ENCODE measurements at regions of chr1 and their contacts with region 1.

Region 1: GRCh38 chr1:168863772-168864171 is 134.8 kb upstream of the DPT start:
- DNase-seq: no peak
- ATAC-seq: no peak
- H3K4me3 ChIP-seq: no peak overlapping the region
- H3K27ac ChIP-seq: no peak overlapping the region
- H3K4me1 ChIP-seq: peaks cover 24% of the 10 kb centered on the region
- H3K27me3 ChIP-seq: no peaks in the 10 kb centered on the region
- CTCF ChIP-seq: no peak

Region 2: DNA sequence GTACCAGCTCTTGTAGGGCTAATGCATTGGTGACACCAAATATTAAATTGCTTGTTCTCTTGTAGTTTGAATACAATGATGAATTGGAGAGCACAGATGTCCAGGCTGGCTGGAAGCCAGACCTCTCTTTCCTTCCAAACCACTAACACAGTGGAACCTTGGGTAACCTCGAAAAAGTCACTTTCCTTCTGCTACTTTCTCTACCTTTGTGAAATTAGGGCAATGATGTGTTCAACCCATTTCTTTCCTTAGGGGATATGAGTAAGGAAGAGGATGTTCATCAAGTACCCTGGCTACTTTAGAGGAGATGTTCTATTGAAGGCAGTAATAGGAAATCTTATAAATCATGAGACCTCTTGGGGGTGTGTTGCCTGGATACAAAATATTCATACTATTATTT is 375.6 kb before region 1 on chr1:
- CTCF ChIA-PET with region 1: no interaction called
- POLR2A ChIA-PET with region 1: no interaction called
- intact Hi-C with region 1: no loop called
- DNase-seq: peak; percentile 48
- ATAC-seq: no peak
- H3K4me3 ChIP-seq: no peak overlapping the region
- H3K27ac ChIP-seq: no peak overlapping the region
- H3K4me1 ChIP-seq: no peaks in the 10 kb centered on the region
- H3K27me3 ChIP-seq: no peaks in the 10 kb centered on the region
- CTCF ChIP-seq: no peak

Region 3: DNA sequence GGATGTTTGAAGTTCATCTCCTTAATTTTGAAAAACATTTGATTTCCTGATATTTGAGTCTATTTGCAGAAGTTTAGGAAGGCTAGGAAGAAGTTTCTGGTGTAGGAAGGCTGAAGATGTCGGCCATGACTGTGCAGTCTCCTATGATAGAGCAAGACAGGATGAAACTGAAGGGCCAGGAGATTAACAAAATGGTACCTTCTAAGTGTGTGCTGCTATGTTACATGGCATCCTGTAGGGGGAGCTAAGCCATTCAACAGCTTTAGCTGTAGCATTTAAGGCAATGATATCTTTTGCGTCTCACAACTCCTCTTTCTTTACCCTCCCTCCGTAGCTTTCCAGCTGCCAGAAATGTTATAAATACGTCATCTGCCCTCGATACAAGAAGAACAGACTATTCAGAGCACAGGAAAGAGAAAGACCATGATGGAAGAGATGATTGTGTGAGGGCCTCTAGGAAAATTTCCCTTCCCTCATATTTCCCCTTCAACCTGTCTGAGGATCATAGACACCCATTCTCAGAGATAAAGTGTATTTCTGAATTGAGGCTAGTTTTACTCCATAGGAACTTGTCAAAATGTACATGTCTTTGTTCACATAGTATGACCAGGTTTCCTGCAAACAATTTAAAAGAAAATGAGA is 226.3 kb before region 1 on chr1:
- CTCF ChIA-PET with region 1: no interaction called
- POLR2A ChIA-PET with region 1: no interaction called
- intact Hi-C with region 1: loop called (anchors 5 kb)
- DNase-seq: peak; percentile 60
- ATAC-seq: no peak
- H3K4me3 ChIP-seq: no peak overlapping the region
- H3K27ac ChIP-seq: no peak overlapping the region
- H3K4me1 ChIP-seq: peaks cover 17% of the 10 kb centered on the region
- H3K27me3 ChIP-seq: no peaks in the 10 kb centered on the region
- CTCF ChIP-seq: peak; percentile 91

Region 4: GRCh38 chr1:168719306-168720111 is 144.3 kb before region 1 on chr1:
- CTCF ChIA-PET with region 1: no interaction called
- POLR2A ChIA-PET with region 1: no interaction called
- intact Hi-C with region 1: no loop called
- DNase-seq: peak; percentile 96
- ATAC-seq: peak; percentile 98
- H3K4me3 ChIP-seq: no peak overlapping the region
- H3K27ac ChIP-seq: peak overlapping the region; percentile 56
- H3K4me1 ChIP-seq: peaks cover 16% of the 10 kb centered on the region
- H3K27me3 ChIP-seq: no peaks in the 10 kb centered on the region
- CTCF ChIP-seq: no peak

Region 5: GRCh38 chr1:168752171-168752832 is 111.5 kb before region 1 on chr1:
- CTCF ChIA-PET with region 1: no interaction called
- POLR2A ChIA-PET with region 1: no interaction called
- intact Hi-C with region 1: loop called (anchors 5 kb)
- DNase-seq: peak; percentile 91
- ATAC-seq: peak; percentile 92
- H3K4me3 ChIP-seq: peak overlapping the region; percentile 47
- H3K27ac ChIP-seq: peak overlapping the region; percentile 77
- H3K4me1 ChIP-seq: peaks cover 24% of the 10 kb centered on the region
- H3K27me3 ChIP-seq: no peaks in the 10 kb centered on the region
- CTCF ChIP-seq: no peak

Region 6: DNA sequence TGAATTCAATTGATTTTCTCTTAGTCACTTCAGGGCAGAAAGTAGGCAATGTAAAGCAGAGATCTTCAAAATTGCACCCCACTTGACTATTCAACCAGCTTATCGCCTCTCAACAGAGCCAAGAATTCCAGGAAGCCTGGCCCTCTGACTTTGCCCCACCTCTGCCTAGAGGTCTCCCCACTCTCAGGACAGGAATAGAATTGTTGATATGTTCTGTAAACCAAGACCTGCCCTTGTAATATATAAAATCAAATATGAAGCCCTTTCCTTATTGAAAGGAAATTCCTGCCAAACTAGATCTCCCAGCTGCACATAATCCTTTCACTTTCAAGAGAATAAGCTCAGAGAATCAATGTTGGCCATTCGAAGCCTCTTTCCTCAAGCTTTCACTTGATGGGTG is 18.6 kb before region 1 on chr1:
- CTCF ChIA-PET with region 1: no interaction called
- POLR2A ChIA-PET with region 1: no interaction called
- intact Hi-C with region 1: loop called (anchors 2 kb)
- DNase-seq: no peak
- ATAC-seq: no peak
- H3K4me3 ChIP-seq: no peak overlapping the region
- H3K27ac ChIP-seq: no peak overlapping the region
- H3K4me1 ChIP-seq: peaks cover 22% of the 10 kb centered on the region
- H3K27me3 ChIP-seq: no peaks in the 10 kb centered on the region
- CTCF ChIP-seq: no peak

Region 7: DNA sequence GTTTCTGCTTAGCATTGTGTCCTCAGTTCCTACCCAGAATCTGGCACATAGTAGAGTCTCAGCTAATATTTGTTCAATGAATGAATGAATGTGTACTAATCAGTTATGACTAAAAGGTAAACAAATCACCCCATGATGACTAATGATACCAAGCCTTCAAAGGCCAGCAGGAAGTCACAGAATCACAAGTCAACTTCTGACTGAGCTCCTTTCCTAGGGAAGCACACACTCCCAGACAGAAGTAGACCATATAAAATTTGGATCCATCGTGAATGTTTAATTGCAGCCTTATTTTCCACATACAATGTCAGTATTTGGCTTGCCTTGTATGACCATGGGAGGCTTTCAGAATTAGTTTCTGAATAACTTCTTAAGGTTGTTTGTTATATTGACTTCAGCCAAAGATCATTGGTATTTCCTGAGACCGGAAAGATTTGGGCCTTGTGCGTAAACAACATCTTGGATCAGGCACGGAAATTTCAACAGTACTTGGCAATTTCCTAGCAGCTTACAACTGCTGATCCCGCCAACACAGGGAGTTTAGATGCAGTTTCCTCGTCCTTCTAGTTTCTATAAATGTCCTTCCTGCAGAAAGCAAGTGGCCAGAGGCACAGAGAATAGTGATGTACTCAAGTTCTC is 56.8 kb after region 1 on chr1:
- CTCF ChIA-PET with region 1: interaction called, 4 read pairs
- POLR2A ChIA-PET with region 1: interaction called, 3 read pairs
- intact Hi-C with region 1: loop called (anchors 1 kb)
- DNase-seq: peak; percentile 97
- ATAC-seq: peak; percentile 92
- H3K4me3 ChIP-seq: peak overlapping the region; percentile 29
- H3K27ac ChIP-seq: peak overlapping the region; percentile 99
- H3K4me1 ChIP-seq: peaks cover 60% of the 10 kb centered on the region
- H3K27me3 ChIP-seq: no peaks in the 10 kb centered on the region
- CTCF ChIP-seq: no peak